CD14-positive monocyte (primary cell): ENCODE measurements at regions of chr13 and their contacts with region 1.

Region 1: GRCh38 chr13:20160847-20161274 is at the start of gene GJA3:
- DNase-seq: no peak
- H3K4me3 ChIP-seq: peak within 1 kb of the TSS in 2 of 3 experiments; percentile 30 to 66
- H3K4me3 Mint-ChIP-seq: peak within 1 kb of the TSS; percentile 77 to 90
- H3K27ac ChIP-seq: no peak within 1 kb of the TSS
- H3K27ac Mint-ChIP-seq: peak within 1 kb of the TSS in 1 of 7 donors; percentile 68
- H3K4me1 ChIP-seq: peaks cover 13 to 23% of the 10 kb centered on the region in 2 donors
- H3K4me1 Mint-ChIP-seq: peaks cover 24% of the 10 kb centered on the region
- H3K27me3 ChIP-seq: peaks cover 67 to 73% of the 10 kb centered on the region in 2 donors
- H3K27me3 Mint-ChIP-seq: peaks cover 57 to 76% (median 68%) of the 10 kb centered on the region in 3 donors
- CTCF ChIP-seq: no peak
- polyA plus RNA-seq, gene GJA3: not detected

Region 2: GRCh38 chr13:19959831-19960652 is 200.8 kb before region 1 on chr13:
- intact Hi-C with region 1: loop called in 1 of 2 experiments (anchors 10 kb)
- DNase-seq: peak; percentile 86 to 88 (median 88)
- H3K4me3 ChIP-seq: peak overlapping the region; percentile 91 to 99 (median 99)
- H3K4me3 Mint-ChIP-seq: peak overlapping the region; percentile 92 to 93
- H3K27ac ChIP-seq: peak overlapping the region; percentile 84 to 94
- H3K27ac Mint-ChIP-seq: peak overlapping the region; percentile 92 to 98 (median 94)
- H3K4me1 ChIP-seq: peaks cover 29 to 51% of the 10 kb centered on the region in 2 donors
- H3K4me1 Mint-ChIP-seq: peaks cover 32% of the 10 kb centered on the region
- H3K27me3 ChIP-seq: no peaks in the 10 kb centered on the region
- H3K27me3 Mint-ChIP-seq: no peaks in the 10 kb centered on the region
- CTCF ChIP-seq: peak; percentile 93

Region 3: GRCh38 chr13:20049558-20050473 is 111.0 kb before region 1 on chr13:
- intact Hi-C with region 1: loop called in 1 of 2 experiments (anchors 10 kb)
- DNase-seq: no peak
- H3K4me3 ChIP-seq: peak overlapping the region in 2 of 3 experiments; percentile 27 to 51
- H3K4me3 Mint-ChIP-seq: peak overlapping the region; percentile 67 to 75
- H3K27ac ChIP-seq: peak overlapping the region in 1 of 2 donors; percentile 64
- H3K27ac Mint-ChIP-seq: peak overlapping the region; percentile 63 to 89 (median 71)
- H3K4me1 ChIP-seq: peaks cover 7 to 20% of the 10 kb centered on the region in 2 donors
- H3K4me1 Mint-ChIP-seq: peaks cover 19% of the 10 kb centered on the region
- H3K27me3 ChIP-seq: no peaks in the 10 kb centered on the region
- H3K27me3 Mint-ChIP-seq: no peaks in the 10 kb centered on the region
- CTCF ChIP-seq: no peak

Region 4: GRCh38 chr13:20090349-20090748 is 70.5 kb before region 1 on chr13:
- intact Hi-C with region 1: loop called (anchors 2 to 10 kb)
- DNase-seq: no peak
- H3K4me3 ChIP-seq: no peak overlapping the region
- H3K4me3 Mint-ChIP-seq: no peak overlapping the region
- H3K27ac ChIP-seq: no peak overlapping the region
- H3K27ac Mint-ChIP-seq: no peak overlapping the region
- H3K4me1 ChIP-seq: no peaks in the 10 kb centered on the region
- H3K4me1 Mint-ChIP-seq: no peaks in the 10 kb centered on the region
- H3K27me3 ChIP-seq: peaks cover 6 to 17% of the 10 kb centered on the region in 2 donors
- H3K27me3 Mint-ChIP-seq: peaks cover 6 to 11% (median 9%) of the 10 kb centered on the region in 3 donors
- CTCF ChIP-seq: peak; percentile 37